ENCODE measurements at regions of chr1 and their contacts with region 1.

Region 1: DNA sequence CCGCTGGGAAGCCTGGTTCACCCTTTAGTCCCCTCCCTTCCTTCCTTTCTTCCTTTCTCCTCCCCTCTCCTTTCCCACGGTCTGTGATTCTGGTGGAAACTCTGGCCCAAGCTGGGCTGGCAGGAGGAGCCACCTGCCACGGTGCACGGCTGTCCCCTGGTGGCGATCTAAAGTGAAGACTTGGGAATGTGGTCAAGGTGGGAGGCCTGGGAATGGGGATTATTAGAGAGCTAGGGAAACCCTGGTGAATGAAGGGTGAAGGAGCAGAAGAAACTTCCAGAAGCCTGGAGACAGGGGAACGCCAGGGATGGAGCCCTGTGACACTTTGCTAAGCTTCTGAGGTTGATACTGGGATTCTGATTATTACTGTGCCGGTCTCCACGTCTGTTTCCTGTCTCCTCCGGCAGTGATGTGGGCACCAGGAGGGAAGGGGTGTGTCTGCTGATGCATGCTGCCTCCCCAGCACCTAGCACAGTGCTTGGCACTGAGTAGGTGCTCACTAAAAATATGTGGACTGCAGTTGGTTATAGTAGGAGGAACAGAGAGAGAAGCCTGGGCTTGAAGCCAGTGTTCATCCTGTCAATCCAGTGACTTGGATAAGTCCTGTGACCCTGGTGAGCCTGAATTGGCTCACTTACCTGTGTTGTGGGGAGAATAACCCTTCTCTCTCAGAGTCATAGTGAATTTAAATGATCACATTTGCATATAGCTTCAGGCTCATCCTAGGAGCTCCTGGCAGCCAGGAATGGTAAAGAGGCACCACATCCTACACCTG is 71.2 kb upstream of the NBPF3 start:
- DNase-seq: peak; percentile 66
- H3K4me3 ChIP-seq: no peak overlapping the region
- H3K27ac ChIP-seq: no peak overlapping the region
- H3K4me1 ChIP-seq: no peaks in the 10 kb centered on the region
- H3K27me3 ChIP-seq: no peaks in the 10 kb centered on the region
- CTCF ChIP-seq: peak; percentile 98 to 99 (median 99)
- POLR2A ChIP-seq: no peak

Region 2: GRCh38 chr1:21232044-21232443 is 136.7 kb before region 1 on chr1:
- intact Hi-C with region 1: loop called (anchors 2 kb)
- DNase-seq: peak; percentile 58
- H3K4me3 ChIP-seq: no peak overlapping the region
- H3K27ac ChIP-seq: no peak overlapping the region
- H3K4me1 ChIP-seq: no peaks in the 10 kb centered on the region
- H3K27me3 ChIP-seq: no peaks in the 10 kb centered on the region
- CTCF ChIP-seq: peak; percentile 58 to 84 (median 82)
- POLR2A ChIP-seq: no peak

Region 3: DNA sequence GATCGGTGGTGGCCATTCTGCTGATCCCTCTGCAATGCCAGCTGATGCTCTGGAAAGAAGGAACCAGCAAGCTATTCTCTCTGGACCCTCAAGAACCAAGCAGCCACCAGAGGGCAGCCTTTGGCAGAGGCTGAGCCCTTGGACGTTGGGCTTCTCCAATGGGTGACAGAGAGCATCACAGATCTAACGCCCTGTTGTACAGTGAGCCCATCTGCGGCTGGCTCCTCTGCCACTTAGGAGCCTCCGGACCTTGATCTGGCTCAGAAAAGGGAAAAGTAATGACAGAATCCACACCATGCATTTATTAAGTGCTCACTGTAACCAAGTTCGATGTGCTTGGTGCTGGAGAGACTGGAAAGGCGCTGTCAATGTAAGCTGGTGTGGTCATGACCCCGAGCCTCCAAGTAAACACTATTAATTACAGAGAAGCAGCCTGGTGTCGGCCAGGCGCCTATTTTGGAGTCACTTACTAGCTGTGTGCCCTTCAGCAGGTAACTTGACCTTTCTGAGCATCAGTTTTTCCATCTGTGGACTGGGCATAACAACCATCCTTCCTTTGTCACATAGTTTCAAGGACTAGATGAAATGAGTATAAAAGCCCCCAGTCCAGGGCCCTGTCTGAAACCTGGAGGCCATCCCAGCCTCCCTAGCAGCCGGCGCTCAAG is 113.3 kb before region 1 on chr1:
- intact Hi-C with region 1: loop called (anchors 1 kb)
- DNase-seq: peak; percentile 90
- H3K4me3 ChIP-seq: no peak overlapping the region
- H3K27ac ChIP-seq: peak overlapping the region; percentile 79 to 83
- H3K4me1 ChIP-seq: peaks cover 7% of the 10 kb centered on the region
- H3K27me3 ChIP-seq: no peaks in the 10 kb centered on the region
- CTCF ChIP-seq: peak; percentile 62 to 94 (median 89)
- POLR2A ChIP-seq: no peak

Region 4: GRCh38 chr1:21266119-21266774 is 102.5 kb before region 1 on chr1:
- intact Hi-C with region 1: no loop called
- DNase-seq: no peak
- H3K4me3 ChIP-seq: no peak overlapping the region
- H3K27ac ChIP-seq: no peak overlapping the region
- H3K4me1 ChIP-seq: peaks cover 25% of the 10 kb centered on the region
- H3K27me3 ChIP-seq: no peaks in the 10 kb centered on the region
- CTCF ChIP-seq: no peak
- POLR2A ChIP-seq: no peak

Region 5: GRCh38 chr1:21659099-21659923 is 290.6 kb after region 1 on chr1:
- intact Hi-C with region 1: loop called (anchors 5 kb)
- DNase-seq: peak; percentile 75
- H3K4me3 ChIP-seq: peak overlapping the region in 1 of 2 donors; percentile 17
- H3K27ac ChIP-seq: no peak overlapping the region
- H3K4me1 ChIP-seq: no peaks in the 10 kb centered on the region
- H3K27me3 ChIP-seq: no peaks in the 10 kb centered on the region
- CTCF ChIP-seq: peak; percentile 89 to 99 (median 94)
- POLR2A ChIP-seq: no peak